CD8-positive, alpha-beta T cell (primary cell): ENCODE measurements at regions of chr7 and their contacts with region 1.

Region 1: GRCh38 chr7:1065263-1066260 is 21.2 kb downstream of the GPR146 start:
- DNase-seq: peak; percentile 69 to 91 (median 83)
- ATAC-seq: peak; percentile 97
- H3K4me3 ChIP-seq: peak overlapping the region; percentile 37 to 42
- H3K4me3 Mint-ChIP-seq: peak overlapping the region; percentile 72
- H3K27ac ChIP-seq: no peak overlapping the region
- H3K27ac Mint-ChIP-seq: no peak overlapping the region
- H3K4me1 ChIP-seq: peaks cover 5% of the 10 kb centered on the region
- H3K4me1 Mint-ChIP-seq: peaks cover 9% of the 10 kb centered on the region
- H3K27me3 ChIP-seq: peaks cover 0 to 4% of the 10 kb centered on the region in 2 experiments
- H3K27me3 Mint-ChIP-seq: no peaks in the 10 kb centered on the region
- CTCF ChIP-seq: peak; percentile 86

Region 2: GRCh38 chr7:909358-910329 is 155.9 kb before region 1 on chr7:
- CTCF ChIA-PET with region 1: interaction called, 7 read pairs
- POLR2A ChIA-PET with region 1: no interaction called
- intact Hi-C with region 1: loop called in 1 of 2 experiments (anchors 5 kb)
- DNase-seq: peak in 6 of 9 experiments; percentile 30 to 64 (median 47)
- ATAC-seq: peak; percentile 19
- H3K4me3 ChIP-seq: peak overlapping the region in 1 of 2 experiments; percentile 48
- H3K4me3 Mint-ChIP-seq: peak overlapping the region; percentile 55
- H3K27ac ChIP-seq: no peak overlapping the region
- H3K27ac Mint-ChIP-seq: peak overlapping the region; percentile 75
- H3K4me1 ChIP-seq: peaks cover 15% of the 10 kb centered on the region
- H3K4me1 Mint-ChIP-seq: peaks cover 9% of the 10 kb centered on the region
- H3K27me3 ChIP-seq: no peaks in the 10 kb centered on the region
- H3K27me3 Mint-ChIP-seq: no peaks in the 10 kb centered on the region
- CTCF ChIP-seq: no peak

Region 3: DNA sequence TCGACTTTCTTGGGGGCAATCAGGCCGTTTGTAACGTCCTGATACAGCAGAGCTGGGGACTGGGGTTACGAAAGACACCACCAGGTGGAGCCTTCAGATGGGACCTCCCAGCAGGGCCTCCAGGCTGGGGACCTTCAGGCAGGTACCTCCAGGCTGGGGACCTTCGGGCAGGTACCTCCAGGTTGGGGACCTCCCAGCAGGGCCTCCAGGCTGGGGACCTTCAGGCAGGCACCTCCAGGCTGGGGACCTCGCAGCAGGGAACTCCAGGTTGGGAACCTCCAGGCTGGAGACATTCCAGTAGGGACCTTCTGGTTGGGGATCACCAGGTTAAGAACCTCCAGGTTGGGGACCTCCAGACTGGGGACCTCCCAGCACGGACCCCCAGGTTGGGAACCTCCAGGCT is 44.7 kb before region 1 on chr7:
- CTCF ChIA-PET with region 1: interaction called, 14 read pairs
- POLR2A ChIA-PET with region 1: no interaction called
- intact Hi-C with region 1: no loop called
- DNase-seq: no peak
- ATAC-seq: no peak
- H3K4me3 ChIP-seq: no peak overlapping the region
- H3K4me3 Mint-ChIP-seq: no peak overlapping the region
- H3K27ac ChIP-seq: no peak overlapping the region
- H3K27ac Mint-ChIP-seq: no peak overlapping the region
- H3K4me1 ChIP-seq: no peaks in the 10 kb centered on the region
- H3K4me1 Mint-ChIP-seq: peaks cover 12% of the 10 kb centered on the region
- H3K27me3 ChIP-seq: no peaks in the 10 kb centered on the region
- H3K27me3 Mint-ChIP-seq: no peaks in the 10 kb centered on the region
- CTCF ChIP-seq: no peak

Region 4: GRCh38 chr7:1044191-1045068 is 21.1 kb before region 1 on chr7 and contains the start of gene GPR146:
- CTCF ChIA-PET with region 1: interaction called, 49 read pairs
- POLR2A ChIA-PET with region 1: interaction called, 3 read pairs
- intact Hi-C with region 1: loop called in 1 of 2 experiments (anchors 1 kb)
- DNase-seq: peak; percentile 76 to 97 (median 91)
- ATAC-seq: peak; percentile 88
- H3K4me3 ChIP-seq: peak within 1 kb of the TSS; percentile 57 to 71
- H3K4me3 Mint-ChIP-seq: peak within 1 kb of the TSS; percentile 84
- H3K27ac ChIP-seq: peak within 1 kb of the TSS; percentile 51 to 57
- H3K27ac Mint-ChIP-seq: peak within 1 kb of the TSS; percentile 52
- H3K4me1 ChIP-seq: peaks cover 53% of the 10 kb centered on the region
- H3K4me1 Mint-ChIP-seq: peaks cover 63% of the 10 kb centered on the region
- H3K27me3 ChIP-seq: no peaks in the 10 kb centered on the region
- H3K27me3 Mint-ChIP-seq: no peaks in the 10 kb centered on the region
- CTCF ChIP-seq: peak; percentile 60
- total RNA-seq, gene GPR146: 4.4 to 5.0 TPM

Region 5: GRCh38 chr7:1086588-1087464 is 21.3 kb after region 1 on chr7:
- CTCF ChIA-PET with region 1: interaction called, 13 read pairs
- POLR2A ChIA-PET with region 1: no interaction called
- intact Hi-C with region 1: no loop called
- DNase-seq: peak; percentile 42 to 88 (median 75)
- ATAC-seq: peak; percentile 84
- H3K4me3 ChIP-seq: peak overlapping the region; percentile 18 to 58
- H3K4me3 Mint-ChIP-seq: peak overlapping the region; percentile 75
- H3K27ac ChIP-seq: no peak overlapping the region
- H3K27ac Mint-ChIP-seq: no peak overlapping the region
- H3K4me1 ChIP-seq: peaks cover 11% of the 10 kb centered on the region
- H3K4me1 Mint-ChIP-seq: peaks cover 11% of the 10 kb centered on the region
- H3K27me3 ChIP-seq: no peaks in the 10 kb centered on the region
- H3K27me3 Mint-ChIP-seq: no peaks in the 10 kb centered on the region
- CTCF ChIP-seq: peak; percentile 98